ENCODE measurements at regions of chr3 and their contacts with region 1.

Region 1: GRCh38 chr3:27484015-27484844 is at the start of gene SLC4A7:
- DNase-seq: peak; percentile 96
- H3K4me3 Mint-ChIP-seq: peak within 1 kb of the TSS; percentile 100
- H3K27ac Mint-ChIP-seq: peak within 1 kb of the TSS; percentile 97
- H3K4me1 Mint-ChIP-seq: peaks cover 41% of the 10 kb centered on the region
- H3K27me3 Mint-ChIP-seq: no peaks in the 10 kb centered on the region
- total RNA-seq, gene SLC4A7: 65.5 and 66.7 TPM in 2 replicates

Region 2: DNA sequence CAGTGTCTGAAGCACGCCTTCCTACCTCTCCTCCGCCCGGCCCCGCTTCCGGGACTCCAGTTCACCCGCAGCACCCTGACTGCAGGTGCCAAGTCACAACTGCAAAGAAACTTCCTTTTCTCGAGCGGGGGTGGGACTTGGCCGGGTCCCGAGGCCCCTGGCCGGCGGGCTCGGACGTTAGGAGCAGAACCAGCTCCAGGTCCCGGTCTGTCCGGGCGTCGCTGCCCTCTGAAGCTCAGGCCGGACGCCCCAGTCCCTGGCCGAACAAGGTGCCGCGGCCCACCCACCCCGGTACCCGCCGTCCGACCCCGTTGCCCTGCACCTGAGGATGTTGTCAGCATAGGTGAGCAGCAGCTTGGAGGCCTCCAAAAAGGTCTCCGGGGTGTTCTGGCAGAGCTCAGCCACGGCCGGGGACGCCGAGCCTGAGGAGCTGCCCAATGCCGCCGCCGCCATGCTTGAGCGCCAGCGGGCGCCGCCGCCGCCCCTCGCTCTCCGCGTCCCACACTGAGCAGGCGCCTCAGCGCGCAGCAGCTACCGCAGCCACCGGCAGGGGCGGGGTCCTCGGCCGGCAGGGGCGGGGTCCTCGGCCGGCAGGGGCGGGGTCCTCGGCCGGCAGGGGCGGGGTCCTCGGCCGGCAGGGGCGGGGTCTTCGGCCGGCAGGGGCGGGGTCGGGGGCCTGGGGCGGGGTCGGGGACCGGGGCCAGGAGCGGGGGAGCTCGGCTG is 1701.1 kb before region 1 on chr3 and contains the start of gene NGLY1:
- intact Hi-C with region 1: loop called (anchors 2 kb)
- DNase-seq: peak; percentile 84
- H3K4me3 Mint-ChIP-seq: peak within 1 kb of the TSS; percentile 86
- H3K27ac Mint-ChIP-seq: peak within 1 kb of the TSS; percentile 82
- H3K4me1 Mint-ChIP-seq: peaks cover 59% of the 10 kb centered on the region
- H3K27me3 Mint-ChIP-seq: no peaks in the 10 kb centered on the region
- total RNA-seq, gene NGLY1: 57.9 and 59.2 TPM in 2 replicates

Region 3: GRCh38 chr3:27185231-27185989 is 298.8 kb before region 1 on chr3:
- intact Hi-C with region 1: no loop called
- DNase-seq: no peak
- H3K4me3 Mint-ChIP-seq: no peak overlapping the region
- H3K27ac Mint-ChIP-seq: no peak overlapping the region
- H3K4me1 Mint-ChIP-seq: no peaks in the 10 kb centered on the region
- H3K27me3 Mint-ChIP-seq: no peaks in the 10 kb centered on the region

Region 4: DNA sequence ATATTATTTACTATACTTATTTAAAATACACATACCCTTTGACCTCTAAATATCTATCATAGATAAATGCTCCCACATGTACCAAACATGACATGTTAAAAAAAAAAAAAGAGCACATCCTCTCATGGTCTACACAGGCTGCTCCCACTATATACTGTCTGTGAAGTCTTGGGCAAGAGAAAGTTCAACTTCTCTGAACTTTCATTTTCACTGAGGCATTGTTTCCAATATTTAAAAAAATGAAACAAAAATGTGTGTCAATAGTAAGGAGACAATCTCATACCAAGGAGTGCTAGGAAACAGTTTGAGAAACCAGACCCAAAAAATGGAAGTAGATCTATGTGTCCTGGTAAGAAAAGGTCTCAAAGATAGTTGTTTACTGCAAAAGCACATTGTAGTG is 29.3 kb before region 1 on chr3:
- intact Hi-C with region 1: loop called (anchors 1 kb)
- DNase-seq: no peak
- H3K4me3 Mint-ChIP-seq: peak overlapping the region; percentile 1
- H3K27ac Mint-ChIP-seq: peak overlapping the region; percentile 85
- H3K4me1 Mint-ChIP-seq: peaks cover 33% of the 10 kb centered on the region
- H3K27me3 Mint-ChIP-seq: no peaks in the 10 kb centered on the region

Region 5: GRCh38 chr3:27533718-27534573 is 49.7 kb after region 1 on chr3:
- intact Hi-C with region 1: loop called (anchors 1 kb)
- DNase-seq: peak; percentile 20
- H3K4me3 Mint-ChIP-seq: peak overlapping the region; percentile 46
- H3K27ac Mint-ChIP-seq: peak overlapping the region; percentile 92
- H3K4me1 Mint-ChIP-seq: peaks cover 31% of the 10 kb centered on the region
- H3K27me3 Mint-ChIP-seq: no peaks in the 10 kb centered on the region

Region 6: DNA sequence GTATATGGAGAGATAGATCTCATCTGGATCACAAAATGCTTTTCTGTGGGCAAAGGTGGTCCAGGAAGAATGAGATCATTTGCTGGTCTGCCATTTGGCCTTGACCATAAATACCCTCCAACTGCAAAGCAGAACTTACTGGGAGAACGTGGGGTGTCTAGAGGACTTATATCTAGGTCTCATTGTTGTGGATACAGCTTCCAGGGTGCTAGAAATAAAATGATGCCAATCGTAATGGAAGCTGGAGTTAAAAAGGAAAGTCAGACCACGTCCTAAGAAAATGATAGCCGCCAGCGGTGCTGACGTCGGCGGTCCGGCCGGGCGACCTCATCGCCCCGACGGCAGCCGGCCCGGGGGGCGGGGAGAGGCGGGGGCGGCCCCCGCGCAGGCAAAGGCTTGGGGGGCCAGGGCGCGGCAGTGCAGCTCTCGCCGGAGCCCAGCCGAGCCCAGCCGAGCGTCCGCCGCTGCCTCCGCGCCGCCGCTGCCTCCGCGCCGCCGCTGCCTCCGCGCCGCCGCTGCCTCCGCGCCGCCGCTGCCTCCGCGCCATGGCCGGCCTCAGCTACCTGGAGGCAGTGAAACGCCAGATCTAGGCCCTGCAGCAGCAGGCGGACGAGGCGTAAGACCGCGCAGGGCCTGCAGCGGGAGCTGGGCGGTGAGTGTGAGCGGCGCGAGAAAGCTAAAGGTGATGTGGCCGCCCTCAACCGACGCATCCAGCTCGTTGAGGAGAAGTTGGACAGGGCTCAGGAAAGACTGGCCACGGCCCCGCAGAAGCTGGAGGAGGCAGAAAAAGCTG is 148.4 kb after region 1 on chr3:
- intact Hi-C with region 1: loop called (anchors 1 kb)
- DNase-seq: peak; percentile 25
- H3K4me3 Mint-ChIP-seq: peak overlapping the region; percentile 86
- H3K27ac Mint-ChIP-seq: peak overlapping the region; percentile 82
- H3K4me1 Mint-ChIP-seq: peaks cover 41% of the 10 kb centered on the region
- H3K27me3 Mint-ChIP-seq: no peaks in the 10 kb centered on the region

Region 7: DNA sequence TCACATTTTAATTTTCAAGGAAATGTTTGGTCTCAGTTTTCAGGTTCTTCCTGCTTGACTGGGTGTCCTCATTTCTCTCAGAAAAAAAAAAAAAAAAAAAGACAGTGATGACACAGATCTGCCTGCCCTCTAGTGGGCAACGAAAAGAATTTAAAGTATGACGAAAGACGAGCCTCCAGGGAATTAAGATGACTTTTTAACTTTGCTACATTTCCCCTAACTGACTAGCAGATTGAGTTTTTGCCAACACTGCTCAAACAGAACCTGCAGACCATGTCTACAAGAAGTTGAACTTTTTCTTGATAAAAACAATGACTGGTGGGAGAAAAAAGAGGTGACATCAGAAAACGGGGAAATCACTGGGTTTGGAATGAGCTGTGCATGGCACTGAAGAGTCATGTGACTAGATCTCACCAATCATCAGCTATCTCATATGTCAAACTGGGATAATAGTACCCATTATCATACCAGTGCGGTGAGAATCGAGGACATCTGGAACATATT is 197.1 kb after region 1 on chr3:
- intact Hi-C with region 1: loop called (anchors 1 kb)
- DNase-seq: no peak
- H3K4me3 Mint-ChIP-seq: peak overlapping the region; percentile 41
- H3K27ac Mint-ChIP-seq: peak overlapping the region; percentile 67
- H3K4me1 Mint-ChIP-seq: peaks cover 10% of the 10 kb centered on the region
- H3K27me3 Mint-ChIP-seq: peaks cover 5% of the 10 kb centered on the region

Region 8: GRCh38 chr3:28348629-28349483 is 864.6 kb after region 1 on chr3 and contains the starts of genes AZI2 and ZCWPW2:
- intact Hi-C with region 1: loop called (anchors 1 kb)
- DNase-seq: peak; percentile 90
- H3K4me3 Mint-ChIP-seq: peak within 1 kb of the TSS; percentile 98
- H3K27ac Mint-ChIP-seq: peak within 1 kb of the TSS; percentile 98
- H3K4me1 Mint-ChIP-seq: peaks cover 66% of the 10 kb centered on the region
- H3K27me3 Mint-ChIP-seq: no peaks in the 10 kb centered on the region
- total RNA-seq, gene AZI2: 43.7 and 44.8 TPM in 2 replicates
- total RNA-seq, gene ZCWPW2: 0.24 TPM in 1 of 2 replicates, not detected in the other